WTC11 (cell line): ENCODE measurements at regions of chr9 and their contacts with region 1.

Region 1: GRCh38 chr9:127785023-127785932 is 556 bp upstream of the CDK9 start:
- DNase-seq: peak; percentile 90
- ATAC-seq: peak; percentile 34
- H3K4me3 Mint-ChIP-seq: peak overlapping the region; percentile 97
- H3K27ac Mint-ChIP-seq: no peak overlapping the region
- H3K4me1 Mint-ChIP-seq: peaks cover 20% of the 10 kb centered on the region
- H3K27me3 Mint-ChIP-seq: no peaks in the 10 kb centered on the region
- CTCF ChIP-seq: peak; percentile 95

Region 2: GRCh38 chr9:127463911-127464310 is 321.4 kb before region 1 on chr9:
- CTCF ChIA-PET with region 1: no interaction called
- POLR2A ChIA-PET with region 1: no interaction called
- DNase-seq: no peak
- ATAC-seq: no peak
- H3K4me3 Mint-ChIP-seq: no peak overlapping the region
- H3K27ac Mint-ChIP-seq: no peak overlapping the region
- H3K4me1 Mint-ChIP-seq: no peaks in the 10 kb centered on the region
- H3K27me3 Mint-ChIP-seq: no peaks in the 10 kb centered on the region
- CTCF ChIP-seq: no peak

Region 3: GRCh38 chr9:127763918-127764384 is 21.3 kb before region 1 on chr9:
- CTCF ChIA-PET with region 1: interaction called, 38 read pairs
- POLR2A ChIA-PET with region 1: no interaction called
- DNase-seq: peak; percentile 78
- ATAC-seq: peak; percentile 78
- H3K4me3 Mint-ChIP-seq: no peak overlapping the region
- H3K27ac Mint-ChIP-seq: peak overlapping the region; percentile 8; the same call in 1 of the 2 replicates
- H3K4me1 Mint-ChIP-seq: peaks cover 44% of the 10 kb centered on the region
- H3K27me3 Mint-ChIP-seq: peaks cover 4% of the 10 kb centered on the region; the same call in 1 of the 2 replicates
- CTCF ChIP-seq: 0 out of 2 replicates have a peak, but pooled peaks have one; percentile 37

Region 4: GRCh38 chr9:127770905-127771569 is 14.2 kb before region 1 on chr9:
- CTCF ChIA-PET with region 1: interaction called, 38 read pairs
- POLR2A ChIA-PET with region 1: interaction called, 4 read pairs
- DNase-seq: peak; percentile 100
- ATAC-seq: peak; percentile 97
- H3K4me3 Mint-ChIP-seq: peak overlapping the region; percentile 84
- H3K27ac Mint-ChIP-seq: no peak overlapping the region
- H3K4me1 Mint-ChIP-seq: peaks cover 32% of the 10 kb centered on the region
- H3K27me3 Mint-ChIP-seq: peaks cover 11% of the 10 kb centered on the region
- CTCF ChIP-seq: no peak

Region 5: DNA sequence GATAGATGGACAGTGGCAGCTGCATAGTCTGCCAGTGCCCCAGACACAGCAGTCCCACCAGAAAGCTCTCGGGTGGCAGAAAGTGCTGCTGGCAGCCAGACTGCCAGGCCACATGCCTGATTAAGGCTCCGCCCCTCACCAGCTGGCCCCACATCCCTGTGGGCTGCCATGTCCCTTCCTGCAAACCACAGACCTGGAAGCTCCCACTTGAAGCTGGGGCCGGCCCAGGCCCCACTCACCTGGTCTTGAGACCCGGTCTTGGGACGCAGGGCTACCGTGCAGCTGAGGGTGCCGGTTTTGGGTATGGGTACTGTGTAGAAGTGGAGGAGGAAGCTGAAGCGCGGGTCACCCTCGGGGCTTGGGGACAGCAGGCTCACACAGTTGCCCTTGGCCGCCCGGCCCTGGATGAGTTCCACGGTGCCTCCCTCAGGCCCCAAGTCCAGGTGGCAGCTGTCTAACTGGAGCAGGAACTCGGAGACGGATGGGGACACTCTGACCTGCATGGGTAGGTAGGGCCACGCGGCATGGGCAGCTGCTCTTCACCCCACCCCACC is 32.7 kb after region 1 on chr9:
- CTCF ChIA-PET with region 1: no interaction called
- POLR2A ChIA-PET with region 1: no interaction called
- DNase-seq: no peak
- ATAC-seq: no peak
- H3K4me3 Mint-ChIP-seq: no peak overlapping the region
- H3K27ac Mint-ChIP-seq: 0 out of 2 replicates have a peak overlapping the region, but pooled peaks have one; percentile 11
- H3K4me1 Mint-ChIP-seq: no peaks in the 10 kb centered on the region
- H3K27me3 Mint-ChIP-seq: no peaks in the 10 kb centered on the region
- CTCF ChIP-seq: no peak